A673 (cell line): ENCODE measurements at regions of chr12 and their contacts with region 1.

Region 1: GRCh38 chr12:123305136-123305535 is 33.5 kb upstream of the CDK2AP1 start:
- DNase-seq: no peak
- H3K4me3 ChIP-seq: no peak overlapping the region
- H3K27ac ChIP-seq: no peak overlapping the region
- H3K4me1 ChIP-seq: no peaks in the 10 kb centered on the region
- H3K27me3 ChIP-seq: no peaks in the 10 kb centered on the region
- CTCF ChIP-seq: no peak

Region 2: GRCh38 chr12:123163227-123163626 is 141.9 kb before region 1 on chr12:
- CTCF ChIA-PET with region 1: interaction called, 15 read pairs
- POLR2A ChIA-PET with region 1: no interaction called
- intact Hi-C with region 1: no loop called
- DNase-seq: no peak
- H3K4me3 ChIP-seq: no peak overlapping the region
- H3K27ac ChIP-seq: no peak overlapping the region
- H3K4me1 ChIP-seq: no peaks in the 10 kb centered on the region
- H3K27me3 ChIP-seq: no peaks in the 10 kb centered on the region
- CTCF ChIP-seq: no peak